Mammary epithelial cell (primary cell): ENCODE measurements at regions of chr10 and their contacts with region 1.

Region 1: GRCh38 chr10:111852801-111853200 is 330.8 kb downstream of the GPAM start:
- DNase-seq: no peak
- H3K4me3 ChIP-seq: no peak overlapping the region
- H3K27ac ChIP-seq: no peak overlapping the region
- H3K4me1 ChIP-seq: no peaks in the 10 kb centered on the region
- H3K27me3 ChIP-seq: no peaks in the 10 kb centered on the region
- CTCF ChIP-seq: no peak

Region 2: DNA sequence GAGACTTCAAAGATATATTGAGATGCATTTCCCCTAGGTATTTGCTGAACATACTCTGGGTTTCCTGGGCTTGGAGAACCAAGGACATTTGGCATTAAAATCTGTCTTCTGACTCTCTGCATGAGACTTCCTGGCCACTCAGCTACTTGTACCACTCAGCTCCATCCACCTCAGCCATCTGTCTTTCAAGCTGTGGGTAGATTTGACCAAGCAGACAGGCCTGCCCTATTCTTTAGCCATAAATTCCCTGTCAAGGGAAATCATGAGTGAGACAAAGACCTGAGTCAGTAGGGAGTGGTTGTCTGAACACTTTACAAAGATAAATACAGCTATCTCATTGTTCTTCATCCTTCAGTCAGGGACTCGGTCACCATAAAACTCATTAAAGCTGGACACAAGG is 68.4 kb before region 1 on chr10:
- CTCF ChIA-PET with region 1: no interaction called
- dilution Hi-C with region 1: loop called (anchors 5 kb)
- in situ Hi-C with region 1: no loop called
- intact Hi-C with region 1: no loop called
- DNase-seq: no peak
- H3K4me3 ChIP-seq: no peak overlapping the region
- H3K27ac ChIP-seq: no peak overlapping the region
- H3K4me1 ChIP-seq: no peaks in the 10 kb centered on the region
- H3K27me3 ChIP-seq: no peaks in the 10 kb centered on the region
- CTCF ChIP-seq: no peak

Region 3: DNA sequence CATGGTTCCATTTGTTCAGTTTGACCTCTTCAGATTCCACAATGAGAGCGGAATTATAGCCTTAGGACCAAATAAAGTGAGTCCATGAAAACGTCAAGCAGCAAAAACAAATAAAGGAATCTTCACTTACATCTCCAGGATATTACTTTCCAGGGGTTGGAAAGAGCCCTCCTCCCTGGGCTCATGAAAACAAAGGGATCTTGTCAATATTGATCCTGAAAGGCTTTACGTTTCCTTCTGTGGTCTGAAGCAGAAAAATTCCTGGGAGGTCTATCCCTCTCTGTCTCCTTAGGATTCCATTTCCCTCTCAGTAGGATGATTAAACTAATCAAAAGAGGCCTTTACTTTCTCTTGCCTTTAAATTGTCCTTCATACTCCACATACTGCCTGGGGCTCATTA is 37.2 kb after region 1 on chr10:
- CTCF ChIA-PET with region 1: no interaction called
- dilution Hi-C with region 1: no loop called
- in situ Hi-C with region 1: no loop called
- intact Hi-C with region 1: no loop called
- DNase-seq: no peak
- H3K4me3 ChIP-seq: no peak overlapping the region
- H3K27ac ChIP-seq: no peak overlapping the region
- H3K4me1 ChIP-seq: no peaks in the 10 kb centered on the region
- H3K27me3 ChIP-seq: no peaks in the 10 kb centered on the region
- CTCF ChIP-seq: no peak